MCF 10A (cell line): ENCODE measurements at regions of chr16 and their contacts with region 1.

Region 1: GRCh38 chr16:56576585-56577293 is 11.9 kb downstream of the MT4 start:
- DNase-seq: peak; percentile 92
- H3K4me3 Mint-ChIP-seq: no peak overlapping the region
- H3K27ac Mint-ChIP-seq: peak overlapping the region; percentile 17
- H3K4me1 Mint-ChIP-seq: peaks cover 10% of the 10 kb centered on the region
- H3K27me3 Mint-ChIP-seq: no peaks in the 10 kb centered on the region
- CTCF ChIP-seq: peak; percentile 92

Region 2: GRCh38 chr16:56513972-56514371 is 62.8 kb before region 1 on chr16:
- CTCF ChIA-PET with region 1: interaction called, 10 read pairs
- POLR2A ChIA-PET with region 1: interaction called, 9 read pairs
- intact Hi-C with region 1: no loop called
- DNase-seq: peak; percentile 67
- H3K4me3 Mint-ChIP-seq: no peak overlapping the region
- H3K27ac Mint-ChIP-seq: no peak overlapping the region
- H3K4me1 Mint-ChIP-seq: peaks cover 21% of the 10 kb centered on the region
- H3K27me3 Mint-ChIP-seq: no peaks in the 10 kb centered on the region
- CTCF ChIP-seq: peak; percentile 50

Region 3: GRCh38 chr16:56564773-56565477 is 11.8 kb before region 1 on chr16 and contains the start of gene MT4:
- CTCF ChIA-PET with region 1: interaction called, 19 read pairs
- POLR2A ChIA-PET with region 1: interaction called, 3 read pairs
- intact Hi-C with region 1: no loop called
- DNase-seq: no peak
- H3K4me3 Mint-ChIP-seq: no peak within 1 kb of the TSS
- H3K27ac Mint-ChIP-seq: no peak within 1 kb of the TSS
- H3K4me1 Mint-ChIP-seq: no peaks in the 10 kb centered on the region
- H3K27me3 Mint-ChIP-seq: peaks cover 12% of the 10 kb centered on the region
- CTCF ChIP-seq: no peak
- total RNA-seq, gene MT4: not detected in 2 replicates

Region 4: GRCh38 chr16:56600398-56600999 is 23.8 kb after region 1 on chr16:
- CTCF ChIA-PET with region 1: interaction called, 27 read pairs
- POLR2A ChIA-PET with region 1: interaction called, 12 read pairs
- intact Hi-C with region 1: loop called (anchors 1 kb)
- DNase-seq: peak; percentile 81
- H3K4me3 Mint-ChIP-seq: no peak overlapping the region
- H3K27ac Mint-ChIP-seq: no peak overlapping the region
- H3K4me1 Mint-ChIP-seq: peaks cover 14% of the 10 kb centered on the region
- H3K27me3 Mint-ChIP-seq: no peaks in the 10 kb centered on the region
- CTCF ChIP-seq: peak; percentile 71

Region 5: GRCh38 chr16:56789360-56789759 is 212.6 kb after region 1 on chr16:
- CTCF ChIA-PET with region 1: interaction called, 7 read pairs
- POLR2A ChIA-PET with region 1: no interaction called
- intact Hi-C with region 1: loop called (anchors 1 kb)
- DNase-seq: peak; percentile 68
- H3K4me3 Mint-ChIP-seq: no peak overlapping the region
- H3K27ac Mint-ChIP-seq: no peak overlapping the region
- H3K4me1 Mint-ChIP-seq: no peaks in the 10 kb centered on the region
- H3K27me3 Mint-ChIP-seq: no peaks in the 10 kb centered on the region
- CTCF ChIP-seq: peak; percentile 49

Region 6: DNA sequence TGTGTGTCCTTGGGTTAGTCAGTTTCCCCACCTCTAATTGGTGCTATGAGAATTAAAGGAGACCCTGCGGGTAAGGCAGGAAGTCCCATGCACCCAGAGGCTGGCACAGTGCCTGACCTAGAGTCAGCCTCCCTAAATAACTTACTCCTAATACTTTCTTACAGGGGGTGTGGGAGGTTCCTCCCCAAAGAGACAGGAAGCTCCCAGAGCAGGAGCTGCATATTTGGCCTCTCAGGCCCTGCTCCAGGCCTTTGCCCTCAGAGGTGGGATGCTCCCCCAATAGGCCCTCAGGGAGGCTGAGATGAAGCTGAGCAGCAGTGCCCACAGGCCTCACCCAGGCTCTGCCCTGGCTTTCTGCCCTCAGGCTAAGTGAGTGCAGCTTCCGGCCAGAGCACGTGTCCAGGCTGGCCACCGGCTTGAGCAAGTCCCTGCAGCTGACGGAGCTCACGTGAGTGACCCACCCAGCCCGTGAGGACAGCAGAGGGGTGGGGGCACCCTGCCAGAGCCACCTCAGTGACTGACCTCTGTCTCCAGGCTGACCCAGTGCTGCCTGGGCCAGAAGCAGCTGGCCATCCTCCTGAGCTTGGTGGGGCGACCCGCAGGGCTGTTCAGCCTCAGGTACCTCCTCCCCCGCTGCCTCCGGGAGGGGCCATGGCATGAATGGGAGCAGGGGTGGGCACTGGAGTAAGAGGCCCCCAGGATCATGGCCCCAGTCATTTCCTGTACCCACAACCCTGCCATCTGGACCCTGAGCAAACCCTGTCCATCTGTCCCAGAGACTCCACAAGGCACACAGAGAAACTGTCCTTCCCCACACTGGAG is 484.6 kb after region 1 on chr16:
- CTCF ChIA-PET with region 1: no interaction called
- POLR2A ChIA-PET with region 1: no interaction called
- intact Hi-C with region 1: no loop called
- DNase-seq: peak; percentile 76
- H3K4me3 Mint-ChIP-seq: no peak overlapping the region
- H3K27ac Mint-ChIP-seq: peak overlapping the region; percentile 75
- H3K4me1 Mint-ChIP-seq: peaks cover 20% of the 10 kb centered on the region
- H3K27me3 Mint-ChIP-seq: no peaks in the 10 kb centered on the region
- CTCF ChIP-seq: no peak